ENCODE measurements at regions of chr1 and their contacts with region 1.

Region 1: GRCh38 chr1:179081687-179082332 is at the start of gene TOR3A:
- DNase-seq: peak; percentile 68 to 74 (median 69)
- H3K4me3 ChIP-seq: peak within 1 kb of the TSS; percentile 68 to 83 (median 77)
- H3K4me3 Mint-ChIP-seq: peak within 1 kb of the TSS; percentile 96 to 98
- H3K27ac ChIP-seq: peak within 1 kb of the TSS; percentile 91 to 93
- H3K27ac Mint-ChIP-seq: peak within 1 kb of the TSS; percentile 94 to 97 (median 95)
- H3K4me1 ChIP-seq: peaks cover 19 to 24% of the 10 kb centered on the region in 2 donors
- H3K4me1 Mint-ChIP-seq: peaks cover 27% of the 10 kb centered on the region
- H3K27me3 ChIP-seq: no peaks in the 10 kb centered on the region
- H3K27me3 Mint-ChIP-seq: peaks cover 0 to 2% (median 0%) of the 10 kb centered on the region in 3 donors
- CTCF ChIP-seq: no peak
- polyA plus RNA-seq, gene TOR3A: 50.0 to 67.8 (median 60.9) TPM

Region 2: GRCh38 chr1:178749581-178750166 is 332.1 kb before region 1 on chr1:
- intact Hi-C with region 1: no loop called
- DNase-seq: no peak
- H3K4me3 ChIP-seq: no peak overlapping the region
- H3K4me3 Mint-ChIP-seq: no peak overlapping the region
- H3K27ac ChIP-seq: no peak overlapping the region
- H3K27ac Mint-ChIP-seq: peak overlapping the region in 1 of 7 donors; percentile 54
- H3K4me1 ChIP-seq: no peaks in the 10 kb centered on the region
- H3K4me1 Mint-ChIP-seq: no peaks in the 10 kb centered on the region
- H3K27me3 ChIP-seq: no peaks in the 10 kb centered on the region
- H3K27me3 Mint-ChIP-seq: peaks cover 0 to 2% (median 0%) of the 10 kb centered on the region in 3 donors
- CTCF ChIP-seq: no peak

Region 3: GRCh38 chr1:179293340-179294327 is 211.8 kb after region 1 on chr1 and contains the start of gene SOAT1:
- intact Hi-C with region 1: loop called (anchors 5 kb)
- DNase-seq: peak; percentile 75 to 85 (median 83)
- H3K4me3 ChIP-seq: peak within 1 kb of the TSS; percentile 74 to 89 (median 88)
- H3K4me3 Mint-ChIP-seq: peak within 1 kb of the TSS; percentile 89 to 95
- H3K27ac ChIP-seq: peak within 1 kb of the TSS; percentile 87 to 88
- H3K27ac Mint-ChIP-seq: peak within 1 kb of the TSS; percentile 95 to 98 (median 97)
- H3K4me1 ChIP-seq: peaks cover 37 to 53% of the 10 kb centered on the region in 2 donors
- H3K4me1 Mint-ChIP-seq: peaks cover 50% of the 10 kb centered on the region
- H3K27me3 ChIP-seq: no peaks in the 10 kb centered on the region
- H3K27me3 Mint-ChIP-seq: peaks cover 0 to 2% (median 0%) of the 10 kb centered on the region in 3 donors
- CTCF ChIP-seq: peak; percentile 18
- polyA plus RNA-seq, gene SOAT1: 15.8 to 158 (median 105) TPM

Region 4: GRCh38 chr1:179809506-179810366 is 727.9 kb after region 1 on chr1:
- intact Hi-C with region 1: loop called in 1 of 2 experiments (anchors 5 kb)
- DNase-seq: peak; percentile 47 to 63 (median 62)
- H3K4me3 ChIP-seq: no peak overlapping the region
- H3K4me3 Mint-ChIP-seq: no peak overlapping the region
- H3K27ac ChIP-seq: no peak overlapping the region
- H3K27ac Mint-ChIP-seq: no peak overlapping the region
- H3K4me1 ChIP-seq: peaks cover 5 to 7% of the 10 kb centered on the region in 2 donors
- H3K4me1 Mint-ChIP-seq: peaks cover 9% of the 10 kb centered on the region
- H3K27me3 ChIP-seq: no peaks in the 10 kb centered on the region
- H3K27me3 Mint-ChIP-seq: peaks cover 5 to 12% (median 9%) of the 10 kb centered on the region in 3 donors
- CTCF ChIP-seq: peak; percentile 87

Measured in CD14-positive monocyte (primary cell).